ENCODE measurements at regions of chr9 and their contacts with region 1.

Region 1: DNA sequence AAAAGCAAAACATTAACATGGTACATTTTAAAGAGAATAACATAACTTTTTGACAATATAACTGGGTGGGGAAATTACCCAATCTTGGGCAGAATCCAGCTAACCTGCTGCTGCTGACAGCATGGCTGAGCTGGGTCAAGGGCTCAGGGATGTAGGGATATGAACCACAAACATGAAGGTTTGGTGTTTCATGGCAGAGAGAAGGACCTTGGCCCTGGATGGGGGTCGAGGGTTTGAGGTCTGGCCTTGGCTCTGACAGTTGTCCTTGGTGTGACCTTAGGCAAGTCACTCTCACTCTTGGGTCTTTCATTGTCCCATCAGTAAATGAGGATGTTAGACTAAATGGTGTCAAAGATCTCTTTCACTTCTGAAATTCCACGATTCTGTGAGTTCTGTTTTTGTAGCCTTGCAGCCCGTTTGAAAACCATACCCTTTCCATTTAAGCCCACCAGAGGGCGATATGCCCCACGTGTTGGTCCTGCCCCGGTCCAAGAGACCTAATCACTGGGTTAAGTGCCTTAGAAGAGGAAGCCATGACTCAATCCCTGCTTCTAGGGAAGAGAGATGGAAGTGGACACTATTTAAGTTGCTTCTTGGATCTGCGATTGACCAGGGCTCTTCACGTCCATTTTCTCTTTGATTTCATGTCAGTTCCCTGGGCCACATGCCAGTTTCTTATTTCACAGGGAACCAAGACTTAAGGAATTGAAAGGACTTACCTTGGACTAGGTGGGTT is 56.8 kb upstream of the TEX48 start:
- DNase-seq: peak; percentile 74 to 82
- H3K4me3 ChIP-seq: no peak overlapping the region
- H3K27ac ChIP-seq: no peak overlapping the region
- H3K4me1 ChIP-seq: no peaks in the 10 kb centered on the region
- H3K27me3 ChIP-seq: no peaks in the 10 kb centered on the region
- CTCF ChIP-seq: peak; percentile 81 to 90

Region 2: GRCh38 chr9:114906908-114907571 is 168.3 kb after region 1 on chr9:
- intact Hi-C with region 1: loop called (anchors 5 kb)
- DNase-seq: no peak
- H3K4me3 ChIP-seq: no peak overlapping the region
- H3K27ac ChIP-seq: no peak overlapping the region
- H3K4me1 ChIP-seq: no peaks in the 10 kb centered on the region
- H3K27me3 ChIP-seq: no peaks in the 10 kb centered on the region
- CTCF ChIP-seq: peak; percentile 33 to 36